Mammary epithelial cell (primary cell): ENCODE measurements at regions of chr3 and their contacts with region 1.

Region 1: DNA sequence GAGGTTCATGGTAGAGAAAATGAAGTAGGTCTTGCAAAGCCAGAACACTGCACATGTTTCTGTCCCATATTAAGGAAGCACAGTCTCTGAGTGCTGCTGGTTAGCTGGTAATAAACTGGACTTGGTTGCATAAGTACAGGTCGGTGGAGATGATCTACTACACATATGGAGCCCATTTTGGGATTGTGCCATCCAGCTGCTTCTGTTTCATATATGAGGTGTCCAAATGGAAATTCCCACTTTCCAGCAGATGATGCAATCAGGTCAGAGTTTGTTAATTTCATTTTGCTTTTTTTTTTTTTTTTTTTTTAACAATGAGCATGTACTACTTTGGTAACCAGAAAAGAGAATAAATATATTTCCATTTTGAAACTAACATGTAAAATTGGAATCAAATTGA is 122.6 kb downstream of the SATB1 start:
- DNase-seq: peak; percentile 69
- H3K4me3 ChIP-seq: no peak overlapping the region
- H3K27ac ChIP-seq: no peak overlapping the region
- H3K4me1 ChIP-seq: peaks cover 7% of the 10 kb centered on the region
- H3K27me3 ChIP-seq: no peaks in the 10 kb centered on the region
- CTCF ChIP-seq: no peak

Region 2: GRCh38 chr3:17901893-17902292 is 400.6 kb before region 1 on chr3:
- CTCF ChIA-PET with region 1: no interaction called
- dilution Hi-C with region 1: loop called (anchors 25 kb)
- in situ Hi-C with region 1: loop called (anchors 25 kb)
- intact Hi-C with region 1: no loop called
- DNase-seq: no peak
- H3K4me3 ChIP-seq: no peak overlapping the region
- H3K27ac ChIP-seq: no peak overlapping the region
- H3K4me1 ChIP-seq: no peaks in the 10 kb centered on the region
- H3K27me3 ChIP-seq: no peaks in the 10 kb centered on the region
- CTCF ChIP-seq: no peak